ENCODE measurements at regions of chr12 and their contacts with region 1.

Region 1: GRCh38 chr12:46005151-46005797 is 14.9 kb upstream of the SCAF11 start:
- DNase-seq: no peak
- H3K4me3 Mint-ChIP-seq: no peak overlapping the region
- H3K27ac Mint-ChIP-seq: no peak overlapping the region
- H3K4me1 Mint-ChIP-seq: no peaks in the 10 kb centered on the region
- H3K27me3 Mint-ChIP-seq: no peaks in the 10 kb centered on the region

Region 2: DNA sequence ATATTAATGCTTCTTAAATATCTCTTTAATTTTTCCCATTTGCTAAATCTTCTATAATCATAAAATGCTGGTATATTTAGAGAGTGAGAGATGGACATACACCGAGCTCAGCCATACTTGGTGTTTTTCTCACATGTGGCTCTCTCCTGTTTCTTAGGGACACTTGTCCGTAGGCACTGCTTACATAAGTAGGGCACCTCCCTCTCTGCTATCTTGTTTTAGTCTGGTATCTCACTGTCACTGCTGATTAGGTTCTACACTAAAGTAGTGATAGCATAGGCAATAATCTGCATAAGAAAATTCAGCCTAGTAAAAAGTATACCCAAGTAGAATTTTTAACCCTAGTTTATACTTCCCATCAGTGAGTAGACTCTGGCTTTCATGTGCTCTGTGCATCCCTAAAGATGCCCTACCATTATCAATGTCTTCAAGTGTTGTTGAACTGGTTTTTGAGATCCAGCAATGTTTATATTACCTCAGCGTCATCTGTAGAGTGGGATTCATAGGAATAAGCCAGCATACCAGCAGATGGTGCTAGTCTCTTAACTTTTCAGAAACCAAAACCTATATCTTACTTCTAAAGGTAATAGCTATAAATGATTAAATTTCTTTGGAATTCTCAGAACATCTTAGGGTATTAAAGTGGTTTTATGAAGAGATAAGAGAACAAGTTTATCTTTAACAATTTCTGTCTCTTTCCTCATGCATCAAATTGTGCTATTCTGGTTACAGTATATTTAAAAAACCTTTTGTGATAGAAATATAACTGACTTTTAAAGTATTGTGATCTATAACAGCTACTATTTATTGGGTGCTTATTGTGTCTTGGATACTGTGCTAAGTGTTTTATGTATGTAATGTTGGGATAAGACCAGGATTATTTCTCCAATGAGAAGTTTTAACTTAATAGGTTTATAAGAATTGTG is 242.8 kb before region 1 on chr12:
- CTCF ChIA-PET with region 1: interaction called, 3 read pairs
- intact Hi-C with region 1: loop called (anchors 1 kb)
- DNase-seq: no peak
- H3K4me3 Mint-ChIP-seq: no peak overlapping the region
- H3K27ac Mint-ChIP-seq: no peak overlapping the region
- H3K4me1 Mint-ChIP-seq: peaks cover 47% of the 10 kb centered on the region
- H3K27me3 Mint-ChIP-seq: no peaks in the 10 kb centered on the region

Measured in activated naive CD4-positive, alpha-beta T cell treated with anti-CD3 and anti-CD28 coated beads for 36 hours (primary cell).